HepG2 (cell line): ENCODE measurements at regions of chr10 and their contacts with region 1.

Region 1: DNA sequence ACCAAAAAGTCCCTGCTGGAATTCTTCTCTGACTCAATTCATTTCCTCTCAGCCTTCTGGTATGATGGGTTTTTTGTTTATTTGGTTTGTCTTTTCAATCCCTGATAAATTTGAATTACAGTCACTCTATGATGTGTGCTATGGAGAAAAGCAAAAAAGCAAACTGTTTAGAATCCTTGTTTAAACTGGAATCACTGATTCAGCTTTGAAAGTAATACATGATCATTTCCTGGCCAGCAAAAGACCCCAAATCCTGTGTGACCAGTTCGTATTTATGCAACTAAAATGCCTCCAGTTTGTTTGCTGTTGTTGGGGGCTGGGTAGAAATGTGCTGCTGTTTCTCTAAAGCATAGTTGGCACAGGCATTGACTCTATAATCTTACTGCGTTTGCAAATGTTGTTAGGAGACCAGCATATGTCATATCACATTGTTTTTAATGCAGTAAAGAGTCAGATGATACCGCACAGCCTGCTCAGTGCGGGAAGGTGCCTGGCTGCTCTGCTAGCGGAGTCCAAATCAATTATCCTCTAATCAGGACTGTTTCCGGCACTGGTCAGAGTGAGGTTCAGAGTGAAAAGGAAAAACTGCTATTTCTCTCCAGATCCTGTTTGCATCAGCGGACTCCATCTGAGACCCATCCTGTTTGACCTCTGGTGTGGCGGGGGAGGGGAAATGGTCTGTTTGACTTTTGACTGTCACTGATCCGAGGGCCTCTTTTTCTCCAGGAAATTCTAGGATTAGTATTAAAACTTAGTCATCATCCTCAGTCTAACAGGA is 40.6 kb upstream of the ADD3 start:
- DNase-seq: peak; percentile 82
- ATAC-seq: peak; percentile 85
- H3K4me3 ChIP-seq: peak overlapping the region; percentile 41 to 56 (median 45)
- H3K27ac ChIP-seq: peak overlapping the region; percentile 62
- H3K4me1 ChIP-seq: peaks cover 71% of the 10 kb centered on the region
- H3K27me3 ChIP-seq: no peaks in the 10 kb centered on the region
- CTCF ChIP-seq: no peak
- EP300 ChIP-seq: peak in 1 of 2 experiments; percentile 64; a peak in 1 of 4 replicates
- POLR2A ChIP-seq: no peak
- RAD21 ChIP-seq: no peak

Region 2: GRCh38 chr10:109883859-109884771 is 83.0 kb before region 1 on chr10:
- CTCF ChIA-PET with region 1: no interaction called
- POLR2A ChIA-PET with region 1: no interaction called
- in situ Hi-C with region 1: no loop called
- intact Hi-C with region 1: loop called (anchors 2 kb)
- DNase-seq: peak; percentile 81
- ATAC-seq: peak; percentile 93
- H3K4me3 ChIP-seq: no peak overlapping the region
- H3K27ac ChIP-seq: no peak overlapping the region
- H3K4me1 ChIP-seq: peaks cover 7% of the 10 kb centered on the region; the same call in 1 of the 2 replicates
- H3K27me3 ChIP-seq: no peaks in the 10 kb centered on the region
- CTCF ChIP-seq: peak; percentile 93
- EP300 ChIP-seq: no peak
- POLR2A ChIP-seq: no peak
- RAD21 ChIP-seq: peak; percentile 95

Region 3: DNA sequence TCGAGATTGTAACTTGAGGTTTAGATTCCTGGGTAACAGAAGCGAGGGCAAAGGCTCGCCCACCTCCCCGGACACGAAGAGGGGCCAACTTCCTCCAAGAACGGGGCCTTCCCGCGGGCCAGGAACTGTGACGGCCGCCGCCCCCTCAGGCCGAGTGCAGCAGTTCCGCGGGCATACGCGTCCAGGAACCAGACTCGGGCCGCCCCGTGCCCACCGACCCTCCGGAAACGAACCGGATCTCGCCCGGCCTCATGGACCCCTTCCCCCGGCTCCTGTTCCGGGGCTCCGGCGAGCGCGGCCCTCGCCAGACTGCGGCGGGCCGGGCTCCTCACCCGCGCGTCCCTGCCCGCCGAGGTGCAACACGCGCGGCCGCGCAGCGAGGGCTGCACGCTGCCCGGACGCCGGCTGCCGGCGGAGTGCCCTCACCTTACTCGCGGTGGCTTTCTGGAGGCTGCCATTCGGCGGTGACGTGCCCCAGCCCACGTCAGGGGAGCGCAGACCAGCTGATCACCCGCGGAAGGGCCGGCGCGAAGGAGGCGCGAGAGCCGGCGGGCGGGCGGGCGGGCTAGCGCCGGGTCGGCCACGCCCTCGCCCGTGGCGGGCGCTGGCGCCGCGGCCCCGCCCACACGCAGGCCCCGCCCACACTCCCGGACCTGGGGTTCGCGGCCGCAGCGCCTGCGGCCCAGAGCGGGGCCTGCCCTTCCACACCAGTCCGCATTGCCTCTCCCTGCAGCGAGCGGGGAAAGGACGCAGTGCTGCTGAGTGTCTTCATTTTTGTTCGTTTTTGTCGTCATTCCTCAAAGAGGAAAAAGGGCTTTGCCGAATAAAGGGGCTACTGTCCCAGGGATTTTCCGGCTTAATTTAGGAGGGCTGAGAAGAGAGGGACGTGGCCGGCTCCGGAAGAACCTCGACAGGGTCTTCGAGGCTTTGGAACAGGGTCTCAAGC is 43.9 kb before region 1 on chr10 and contains the start of gene XPNPEP1:
- CTCF ChIA-PET with region 1: no interaction called
- POLR2A ChIA-PET with region 1: no interaction called
- in situ Hi-C with region 1: no loop called
- intact Hi-C with region 1: loop called (anchors 2 kb)
- DNase-seq: peak; percentile 70
- ATAC-seq: peak; percentile 91
- H3K4me3 ChIP-seq: peak within 1 kb of the TSS; percentile 80 to 96 (median 92)
- H3K27ac ChIP-seq: peak within 1 kb of the TSS; percentile 52
- H3K4me1 ChIP-seq: peaks cover 39% of the 10 kb centered on the region
- H3K27me3 ChIP-seq: peaks cover 1 to 27% of the 10 kb centered on the region in 2 experiments; a peak in 3 of 5 replicates
- CTCF ChIP-seq: no peak
- EP300 ChIP-seq: no peak
- POLR2A ChIP-seq: peak; percentile 84 to 85
- RAD21 ChIP-seq: peak; percentile 40
- total RNA-seq, gene XPNPEP1: 28.4 and 30.3 TPM in 2 replicates

Region 4: DNA sequence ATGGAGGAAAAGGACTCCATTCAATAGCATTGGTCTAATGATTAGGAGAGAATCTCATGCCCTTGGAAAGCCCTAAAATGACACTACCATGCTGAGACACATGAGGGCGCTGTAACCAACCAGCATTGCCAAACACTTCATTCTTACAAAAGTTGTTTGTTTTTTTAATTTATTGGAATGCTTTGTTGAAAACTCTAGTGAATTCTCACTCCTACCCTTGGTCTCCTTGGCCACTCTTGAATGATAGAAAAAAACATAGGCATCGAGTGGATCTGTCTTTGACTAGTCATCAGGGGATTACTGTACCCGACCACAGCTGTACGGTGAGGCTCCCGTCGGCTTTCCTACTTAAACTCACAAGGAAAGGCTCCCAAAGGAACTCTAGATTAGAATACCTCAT is 11.3 kb after region 1 on chr10:
- CTCF ChIA-PET with region 1: no interaction called
- POLR2A ChIA-PET with region 1: interaction called, 5 read pairs
- in situ Hi-C with region 1: no loop called
- intact Hi-C with region 1: loop called (anchors 1 kb)
- DNase-seq: peak; percentile 29
- ATAC-seq: no peak
- H3K4me3 ChIP-seq: no peak overlapping the region
- H3K27ac ChIP-seq: peak overlapping the region; percentile 86
- H3K4me1 ChIP-seq: peaks cover 54% of the 10 kb centered on the region
- H3K27me3 ChIP-seq: no peaks in the 10 kb centered on the region
- CTCF ChIP-seq: peak; percentile 51
- EP300 ChIP-seq: no peak
- POLR2A ChIP-seq: no peak
- RAD21 ChIP-seq: peak; percentile 53

Region 5: GRCh38 chr10:110067960-110068770 is 101.0 kb after region 1 on chr10:
- CTCF ChIA-PET with region 1: no interaction called
- POLR2A ChIA-PET with region 1: no interaction called
- in situ Hi-C with region 1: no loop called
- intact Hi-C with region 1: no loop called
- DNase-seq: peak; percentile 44
- ATAC-seq: peak; percentile 36; the same call in 1 of the 3 replicates
- H3K4me3 ChIP-seq: no peak overlapping the region
- H3K27ac ChIP-seq: no peak overlapping the region
- H3K4me1 ChIP-seq: peaks cover 34% of the 10 kb centered on the region
- H3K27me3 ChIP-seq: no peaks in the 10 kb centered on the region
- CTCF ChIP-seq: no peak
- EP300 ChIP-seq: no peak
- POLR2A ChIP-seq: no peak
- RAD21 ChIP-seq: no peak

Region 6: GRCh38 chr10:110110338-110110737 is 143.2 kb after region 1 on chr10:
- CTCF ChIA-PET with region 1: no interaction called
- POLR2A ChIA-PET with region 1: no interaction called
- in situ Hi-C with region 1: no loop called
- intact Hi-C with region 1: loop called (anchors 10 kb)
- DNase-seq: no peak
- ATAC-seq: no peak
- H3K4me3 ChIP-seq: no peak overlapping the region
- H3K27ac ChIP-seq: no peak overlapping the region
- H3K4me1 ChIP-seq: no peaks in the 10 kb centered on the region
- H3K27me3 ChIP-seq: no peaks in the 10 kb centered on the region
- CTCF ChIP-seq: no peak
- EP300 ChIP-seq: no peak
- POLR2A ChIP-seq: no peak
- RAD21 ChIP-seq: no peak